Left lung (tissue), 14 donors: ENCODE measurements at regions of chr9 and their contacts with region 1.

Region 1: GRCh38 chr9:137302176-137302994 is at the start of gene NRARP:
- DNase-seq: peak in 3 of 4 donors; percentile 89 to 95 (median 91)
- ATAC-seq: peak; percentile 72
- H3K4me3 ChIP-seq: peak within 1 kb of the TSS; percentile 34 to 47
- H3K27ac ChIP-seq: peak within 1 kb of the TSS; percentile 62 to 70
- H3K4me1 ChIP-seq: peaks cover 29 to 78% of the 10 kb centered on the region in 2 donors
- H3K27me3 ChIP-seq: peaks cover 12 to 93% of the 10 kb centered on the region in 2 donors
- CTCF ChIP-seq: peak; percentile 37 to 71
- polyA plus RNA-seq, gene NRARP: 7.0 to 11.1 (median 9.0) TPM

Region 2: DNA sequence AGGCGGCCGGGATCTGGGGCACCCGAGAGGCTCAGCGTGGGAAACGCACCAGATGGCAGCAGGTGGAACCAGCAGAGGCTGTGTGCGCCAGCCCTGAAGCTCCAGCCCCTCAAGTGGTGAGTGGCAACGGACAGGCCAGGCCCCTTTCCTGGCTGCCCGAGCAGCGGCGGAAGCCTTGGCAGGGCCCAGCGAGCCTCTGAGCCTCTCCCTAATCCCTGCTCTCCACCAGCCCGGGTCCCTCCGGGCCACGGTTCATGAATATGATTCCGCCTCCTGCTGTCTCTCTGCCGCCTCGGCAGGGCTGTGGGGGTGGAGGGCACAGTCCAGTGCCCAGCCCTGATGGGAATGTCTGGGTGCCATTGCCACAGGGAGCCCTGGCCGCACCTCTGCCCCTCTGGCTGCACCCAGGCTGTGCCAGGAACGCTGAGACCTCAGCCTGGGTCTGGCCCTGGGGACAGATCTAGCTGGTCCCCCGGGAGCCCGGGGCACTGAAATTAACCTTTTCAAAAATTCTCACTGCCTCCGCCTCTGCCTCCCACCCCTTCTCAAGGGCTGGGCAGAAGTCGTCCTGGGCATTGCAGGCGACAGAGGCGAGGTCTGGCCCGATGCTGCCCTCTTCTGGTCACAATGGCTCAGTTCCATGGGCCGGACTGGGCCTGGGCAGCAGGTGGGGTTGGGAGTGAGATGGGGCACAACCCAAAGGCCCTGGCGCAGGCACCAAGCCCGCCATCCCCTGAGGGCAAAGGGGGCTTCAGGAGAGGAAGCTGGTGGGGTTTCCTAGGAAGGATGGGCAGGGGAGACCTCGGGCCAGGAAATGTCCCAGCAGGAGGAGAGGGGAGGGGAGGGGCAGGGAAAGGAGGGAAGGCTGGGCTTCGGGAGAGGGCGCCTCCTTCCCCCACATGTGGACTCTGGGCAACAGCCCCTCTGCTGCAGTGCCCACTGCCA is 1018.8 kb before region 1 on chr9:
- intact Hi-C with region 1: no loop called
- DNase-seq: peak; percentile 40 to 93 (median 78)
- ATAC-seq: peak; percentile 98
- H3K4me3 ChIP-seq: peak overlapping the region in 1 of 2 donors; percentile 18
- H3K27ac ChIP-seq: no peak overlapping the region
- H3K4me1 ChIP-seq: peaks cover 3 to 7% of the 10 kb centered on the region in 2 donors
- H3K27me3 ChIP-seq: peaks cover 0 to 69% of the 10 kb centered on the region in 2 donors
- CTCF ChIP-seq: peak; percentile 78 to 91

Region 3: DNA sequence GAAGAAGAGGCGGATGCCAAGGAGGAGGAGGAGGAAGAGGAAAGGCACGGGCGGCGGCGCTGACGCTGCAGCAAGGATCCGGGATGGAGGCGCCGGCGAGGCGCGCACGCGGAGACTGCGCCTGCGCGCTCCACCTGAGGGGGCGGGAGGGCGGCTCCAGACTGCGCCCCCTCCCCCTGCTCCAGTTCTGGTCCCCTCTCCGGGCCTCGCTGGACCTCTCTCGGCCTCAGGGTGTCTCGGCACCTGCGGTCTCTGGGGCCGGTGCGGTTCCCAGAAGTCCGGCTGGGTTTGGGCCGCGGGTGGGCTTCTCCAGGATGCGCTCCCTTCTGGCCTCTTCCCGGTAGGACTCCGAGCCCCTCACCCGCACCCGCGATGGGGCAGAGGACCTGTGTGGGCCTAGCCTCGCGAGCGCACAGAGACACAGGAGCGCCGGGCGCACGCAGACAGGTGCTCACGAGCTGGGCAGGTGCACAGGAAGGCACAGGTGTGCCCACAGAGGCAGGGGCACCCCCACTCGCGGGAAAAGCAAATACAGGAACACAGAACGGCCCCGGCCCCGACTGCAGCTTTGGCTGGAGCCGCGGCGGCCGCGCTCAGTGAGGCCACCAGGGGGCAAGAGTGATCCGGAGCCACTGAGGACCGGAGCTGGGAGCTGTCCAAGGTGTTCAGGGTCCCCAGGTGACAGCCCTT is 256.1 kb before region 1 on chr9 and contains the start of gene NPDC1:
- intact Hi-C with region 1: no loop called
- DNase-seq: peak; percentile 47 to 93 (median 80)
- ATAC-seq: peak; percentile 87
- H3K4me3 ChIP-seq: peak within 1 kb of the TSS; percentile 40 to 53
- H3K27ac ChIP-seq: peak within 1 kb of the TSS; percentile 39 to 65
- H3K4me1 ChIP-seq: peaks cover 19 to 40% of the 10 kb centered on the region in 2 donors
- H3K27me3 ChIP-seq: peaks cover 27 to 86% of the 10 kb centered on the region in 2 donors
- CTCF ChIP-seq: peak; percentile 77 to 87
- polyA plus RNA-seq, gene NPDC1: 24.4 to 48.9 (median 25.2) TPM

Region 4: GRCh38 chr9:137406876-137407589 is 104.6 kb after region 1 on chr9:
- intact Hi-C with region 1: loop called in 1 of 2 experiments (anchors 10 kb)
- DNase-seq: peak in 2 of 4 donors; percentile 69 to 88
- ATAC-seq: peak; percentile 92
- H3K4me3 ChIP-seq: peak overlapping the region; percentile 15 to 30
- H3K27ac ChIP-seq: peak overlapping the region in 1 of 2 donors; percentile 55
- H3K4me1 ChIP-seq: peaks cover 14 to 40% of the 10 kb centered on the region in 2 donors
- H3K27me3 ChIP-seq: peaks cover 0 to 37% of the 10 kb centered on the region in 2 donors
- CTCF ChIP-seq: peak; percentile 74 to 83

Region 5: DNA sequence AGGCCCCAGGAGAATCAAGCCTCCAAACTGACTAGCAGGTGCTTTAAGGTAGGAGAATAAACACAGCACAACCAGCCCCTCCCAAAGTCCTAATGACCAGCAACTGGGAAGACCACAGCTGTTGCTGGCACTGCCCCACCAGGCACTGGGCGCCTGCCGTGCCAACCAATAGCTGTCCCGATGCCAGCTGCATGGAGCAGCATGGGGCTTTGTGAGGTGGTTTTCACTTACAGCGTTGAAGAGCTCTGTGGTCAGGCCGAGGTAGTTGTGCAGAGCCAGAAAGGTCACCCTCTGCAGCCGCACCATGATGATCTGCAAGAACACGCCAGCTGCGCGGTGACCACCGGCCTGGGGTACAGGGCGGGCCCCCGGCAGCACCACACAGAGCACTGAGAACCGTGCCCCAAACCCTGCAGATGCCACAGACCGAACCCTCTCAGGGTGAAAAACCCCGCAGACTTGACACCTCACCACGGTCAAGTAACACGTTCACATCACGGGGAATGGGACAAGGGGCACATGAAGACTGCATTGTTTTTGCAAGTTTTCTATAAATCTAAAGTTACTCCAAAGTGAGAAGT is 219.1 kb after region 1 on chr9:
- intact Hi-C with region 1: no loop called
- DNase-seq: peak in 1 of 4 donors; percentile 21
- ATAC-seq: no peak
- H3K4me3 ChIP-seq: no peak overlapping the region
- H3K27ac ChIP-seq: no peak overlapping the region
- H3K4me1 ChIP-seq: peaks cover 0 to 2% of the 10 kb centered on the region in 2 donors
- H3K27me3 ChIP-seq: no peaks in the 10 kb centered on the region
- CTCF ChIP-seq: no peak